ENCODE measurements at regions of chr3 and their contacts with region 1.

Region 1: DNA sequence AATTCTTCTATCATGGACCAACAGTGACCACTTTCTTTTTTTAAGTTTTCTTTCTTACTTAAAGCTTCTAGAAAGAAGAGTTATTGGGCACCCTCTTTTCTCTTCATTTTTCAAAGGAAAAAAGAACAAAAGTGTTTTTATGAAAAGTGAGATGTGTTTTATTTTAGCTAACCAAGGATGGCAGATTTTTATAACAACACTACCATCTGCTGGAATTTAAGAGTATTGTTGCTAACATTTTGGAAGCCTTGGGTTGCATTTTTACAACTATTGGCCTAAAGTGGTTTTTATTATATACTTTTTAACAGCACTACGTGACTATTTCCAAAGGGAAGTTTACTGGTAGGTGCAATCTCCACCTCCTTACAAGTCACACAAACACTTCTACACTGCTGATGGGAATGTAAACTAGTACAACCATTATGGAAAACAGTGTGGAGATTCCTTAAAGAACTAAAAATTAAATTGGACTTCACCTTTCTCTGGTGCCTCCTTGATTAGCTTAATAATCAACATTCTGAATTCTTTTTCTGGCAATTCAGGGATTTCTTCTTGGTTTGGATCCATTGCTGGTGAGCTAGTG is 237.7 kb upstream of the AGTR1 start:
- ATAC-seq: no peak
- H3K4me3 ChIP-seq: no peak overlapping the region
- H3K27ac ChIP-seq: no peak overlapping the region
- H3K4me1 ChIP-seq: no peaks in the 10 kb centered on the region

Region 2: DNA sequence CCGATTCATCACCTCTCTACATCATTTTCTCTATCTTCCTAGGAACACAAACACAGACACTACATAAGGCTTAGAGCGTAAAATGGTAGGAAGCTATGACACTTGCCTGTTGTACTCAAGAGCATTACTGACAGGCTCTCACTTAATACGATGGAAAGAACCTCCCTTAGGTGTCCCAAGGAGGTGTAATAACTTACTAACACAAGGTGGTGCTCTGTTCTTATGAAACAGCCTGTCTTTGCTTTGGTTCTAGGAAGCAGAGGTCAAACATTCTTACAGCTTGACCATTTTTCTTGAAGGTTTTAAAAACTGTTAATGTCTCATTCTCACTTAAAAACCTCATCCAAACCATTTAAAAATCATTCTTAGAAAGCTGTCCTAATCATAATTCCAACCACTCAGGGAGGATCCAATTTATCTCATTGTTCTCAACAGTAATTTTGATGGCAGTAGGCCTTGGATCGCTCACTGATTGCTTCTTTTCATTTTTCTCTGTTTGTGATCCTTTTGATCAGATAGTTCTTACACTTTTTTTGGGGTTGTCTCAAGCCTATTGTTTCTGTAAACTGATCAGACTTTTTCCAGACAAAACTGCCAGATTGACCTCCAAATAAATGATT is 80.1 kb before region 1 on chr3:
- in situ Hi-C with region 1: loop called in 1 of 9 experiments (anchors 10 kb)
- ATAC-seq: peak; percentile 46 to 98 (median 76)
- H3K4me3 ChIP-seq: no peak overlapping the region
- H3K27ac ChIP-seq: no peak overlapping the region
- H3K4me1 ChIP-seq: no peaks in the 10 kb centered on the region

Region 3: GRCh38 chr3:148643389-148643840 is 183.4 kb after region 1 on chr3:
- in situ Hi-C with region 1: loop called in 1 of 9 experiments (anchors 25 kb)
- ATAC-seq: peak in 2 of 8 experiments; percentile 25 to 27
- H3K4me3 ChIP-seq: no peak overlapping the region
- H3K27ac ChIP-seq: no peak overlapping the region
- H3K4me1 ChIP-seq: no peaks in the 10 kb centered on the region

Region 4: GRCh38 chr3:148718982-148719862 is 259.2 kb after region 1 on chr3:
- in situ Hi-C with region 1: loop called in 1 of 9 experiments (anchors 25 kb)
- ATAC-seq: no peak
- H3K4me3 ChIP-seq: no peak overlapping the region
- H3K27ac ChIP-seq: no peak overlapping the region
- H3K4me1 ChIP-seq: no peaks in the 10 kb centered on the region